HepG2 (cell line): ENCODE measurements at regions of chr12 and their contacts with region 1.

Region 1: DNA sequence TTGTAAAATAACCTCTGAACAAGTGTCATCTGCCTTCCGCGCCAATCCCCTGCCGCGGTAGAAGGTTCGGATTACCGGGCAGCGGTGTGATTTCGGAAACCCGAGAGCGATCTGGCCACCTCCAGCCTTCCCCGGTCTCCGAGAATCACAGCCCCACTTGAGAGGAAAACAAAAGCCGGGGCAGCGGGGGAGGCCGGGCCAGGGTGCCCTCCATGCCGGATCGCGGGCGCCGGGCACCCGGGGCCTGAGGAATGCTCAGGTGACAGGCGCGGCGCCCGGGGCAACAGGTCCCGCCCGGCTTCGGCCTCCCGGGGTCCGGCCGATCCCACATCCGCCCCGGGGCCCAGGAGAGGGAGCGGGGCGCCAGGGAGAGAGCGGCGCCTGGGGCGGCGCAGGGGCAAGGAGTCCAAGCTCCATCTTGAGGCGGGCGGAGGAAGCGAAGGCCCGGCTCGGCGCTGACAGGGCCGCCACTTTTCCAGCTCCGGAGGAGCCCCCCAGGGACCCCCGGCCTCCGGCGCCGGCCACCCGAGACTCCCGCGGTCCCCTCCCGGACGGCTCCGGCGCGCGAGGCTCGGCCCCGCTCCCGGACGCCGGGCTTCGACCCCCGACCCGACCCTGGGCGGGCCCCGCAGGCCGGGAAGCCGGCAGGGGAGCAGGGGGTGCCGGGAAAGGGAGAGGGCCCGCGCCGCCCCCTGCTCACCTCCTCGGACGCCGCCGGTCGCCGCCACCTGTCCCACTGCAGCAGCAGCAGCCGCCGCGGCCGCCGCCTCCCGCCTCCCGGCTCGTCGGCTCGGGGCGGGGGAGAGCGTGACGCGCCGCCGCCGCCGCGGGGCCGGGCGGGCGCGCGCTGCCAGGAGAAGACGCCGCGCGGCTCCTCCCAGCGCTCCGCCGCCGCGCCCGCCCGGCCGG is at the start of gene CLIP1:
- DNase-seq: peak; percentile 27
- ATAC-seq: peak; percentile 67
- H3K4me3 ChIP-seq: peak within 1 kb of the TSS; percentile 80 to 82 (median 81)
- H3K27ac ChIP-seq: peak within 1 kb of the TSS; percentile 76
- H3K4me1 ChIP-seq: peaks cover 59% of the 10 kb centered on the region
- H3K27me3 ChIP-seq: no peaks in the 10 kb centered on the region; a peak in 1 of 5 replicates
- CTCF ChIP-seq: peak; percentile 49
- EP300 ChIP-seq: no peak
- POLR2A ChIP-seq: peak in 1 of 2 experiments; percentile 23; a peak in 1 of 4 replicates
- RAD21 ChIP-seq: peak; percentile 53; the same call in 1 of the 2 replicates
- total RNA-seq, gene CLIP1: 28.9 and 30.2 TPM in 2 replicates

Region 2: DNA sequence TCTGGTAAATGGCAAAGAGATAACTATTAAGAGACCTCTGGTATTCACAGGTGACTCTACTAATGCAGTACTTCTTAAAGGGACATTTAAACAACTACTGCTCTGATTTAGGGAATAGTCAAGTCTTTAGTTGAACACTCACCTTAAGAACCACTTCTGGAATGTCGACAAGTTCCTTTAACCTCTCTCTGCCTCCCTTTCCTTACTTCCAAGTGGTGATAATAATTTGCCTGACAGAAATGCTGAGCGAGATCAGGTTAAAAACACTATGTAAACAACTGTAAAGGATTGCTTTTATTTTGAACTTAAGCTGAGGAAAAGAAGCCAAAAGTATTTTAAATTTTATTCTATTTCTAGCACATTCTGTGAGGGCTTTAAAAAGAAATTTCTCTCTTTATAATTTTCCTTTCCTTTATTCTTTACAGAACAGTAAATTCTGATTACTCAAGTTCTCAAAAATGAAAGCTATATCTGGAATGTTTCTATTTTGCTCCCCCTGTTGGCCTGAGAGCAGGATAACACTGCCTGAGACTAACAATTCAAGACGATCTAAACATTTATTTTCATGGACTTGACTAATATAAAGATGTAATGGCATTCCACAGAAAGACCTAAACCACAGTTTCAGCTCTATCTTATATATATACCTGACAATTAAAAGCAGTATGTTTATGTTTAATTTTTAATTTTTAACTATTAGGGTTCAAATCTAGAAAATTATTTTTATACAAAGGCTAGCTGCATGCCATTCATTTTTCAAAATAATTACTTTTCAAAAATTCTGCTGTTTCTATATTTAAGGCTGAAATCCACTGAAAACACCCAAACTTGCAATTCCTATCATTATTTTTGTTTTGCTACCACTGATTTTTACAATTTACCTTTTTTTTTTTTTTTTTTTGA is 49.5 kb after region 1 on chr12:
- CTCF ChIA-PET with region 1: interaction called, 7 read pairs
- POLR2A ChIA-PET with region 1: interaction called, 3 read pairs
- in situ Hi-C with region 1: no loop called
- intact Hi-C with region 1: loop called (anchors 1 kb)
- DNase-seq: peak; percentile 77
- ATAC-seq: peak; percentile 52
- H3K4me3 ChIP-seq: no peak overlapping the region
- H3K27ac ChIP-seq: no peak overlapping the region
- H3K4me1 ChIP-seq: peaks cover 7% of the 10 kb centered on the region
- H3K27me3 ChIP-seq: no peaks in the 10 kb centered on the region
- CTCF ChIP-seq: peak; percentile 71
- EP300 ChIP-seq: no peak
- POLR2A ChIP-seq: no peak
- RAD21 ChIP-seq: peak; percentile 48; the same call in 1 of the 2 replicates

Region 3: GRCh38 chr12:122799641-122800243 is 377.7 kb after region 1 on chr12:
- CTCF ChIA-PET with region 1: no interaction called
- POLR2A ChIA-PET with region 1: no interaction called
- in situ Hi-C with region 1: no loop called
- intact Hi-C with region 1: no loop called
- DNase-seq: no peak
- ATAC-seq: peak; percentile 80
- H3K4me3 ChIP-seq: no peak overlapping the region
- H3K27ac ChIP-seq: no peak overlapping the region
- H3K4me1 ChIP-seq: 0 out of 2 replicates have a peak, but pooled peaks cover 8% of the 10 kb centered on the region
- H3K27me3 ChIP-seq: peaks cover 0 to 8% of the 10 kb centered on the region in 2 experiments; a peak in 3 of 5 replicates
- CTCF ChIP-seq: no peak
- EP300 ChIP-seq: no peak
- POLR2A ChIP-seq: no peak
- RAD21 ChIP-seq: no peak